Caco-2 (cell line): ENCODE measurements at regions of chr10 and their contacts with region 1.

Region 1: GRCh38 chr10:63157845-63158624 is 24.9 kb downstream of the NRBF2 start:
- DNase-seq: peak; percentile 70 to 80
- H3K4me3 ChIP-seq: no peak overlapping the region
- H3K4me3 Mint-ChIP-seq: no peak overlapping the region
- H3K27ac Mint-ChIP-seq: no peak overlapping the region
- H3K4me1 ChIP-seq: no peaks in the 10 kb centered on the region
- H3K4me1 Mint-ChIP-seq: no peaks in the 10 kb centered on the region
- H3K27me3 ChIP-seq: no peaks in the 10 kb centered on the region
- H3K27me3 Mint-ChIP-seq: no peaks in the 10 kb centered on the region
- CTCF ChIP-seq: peak; percentile 91 to 92

Region 2: DNA sequence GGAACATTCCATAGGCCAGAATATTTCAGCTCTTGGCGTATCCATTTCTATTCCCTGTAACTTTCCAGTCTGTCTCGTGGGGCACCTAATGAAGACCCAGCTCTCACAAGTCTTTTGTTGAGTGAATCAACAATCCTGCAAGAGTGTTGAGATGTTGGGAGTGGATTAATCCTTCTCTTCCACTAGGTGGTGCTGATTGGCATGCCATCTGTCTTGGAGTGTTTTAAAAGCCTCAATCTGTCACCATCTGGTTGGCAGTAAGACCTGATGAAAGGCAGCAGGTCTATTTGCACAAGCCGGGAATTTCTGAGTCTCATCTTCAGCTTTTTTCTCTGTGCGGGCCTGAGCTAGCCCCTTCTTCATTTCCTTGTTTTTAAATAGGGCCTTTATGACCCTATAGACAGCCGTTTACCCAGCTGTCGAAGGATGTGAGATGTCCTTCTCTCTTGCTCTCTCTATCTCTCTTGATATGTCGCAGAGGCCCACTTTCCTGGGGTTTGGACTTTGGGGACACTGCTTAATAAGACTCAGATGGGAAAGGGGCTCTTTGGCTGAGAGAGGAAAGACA is 603.3 kb before region 1 on chr10:
- CTCF ChIA-PET with region 1: no interaction called
- POLR2A ChIA-PET with region 1: no interaction called
- intact Hi-C with region 1: loop called (anchors 1 kb)
- DNase-seq: peak in 1 of 2 experiments; percentile 50
- H3K4me3 ChIP-seq: no peak overlapping the region
- H3K4me3 Mint-ChIP-seq: no peak overlapping the region
- H3K27ac Mint-ChIP-seq: no peak overlapping the region
- H3K4me1 ChIP-seq: no peaks in the 10 kb centered on the region
- H3K4me1 Mint-ChIP-seq: no peaks in the 10 kb centered on the region
- H3K27me3 ChIP-seq: no peaks in the 10 kb centered on the region; the same call in 1 of the 2 replicates
- H3K27me3 Mint-ChIP-seq: peaks cover 22% of the 10 kb centered on the region
- CTCF ChIP-seq: peak; percentile 52 to 74

Region 3: GRCh38 chr10:62610649-62611229 is 547.3 kb before region 1 on chr10:
- CTCF ChIA-PET with region 1: no interaction called
- POLR2A ChIA-PET with region 1: no interaction called
- intact Hi-C with region 1: loop called (anchors 1 kb)
- DNase-seq: peak; percentile 79 to 85
- H3K4me3 ChIP-seq: no peak overlapping the region
- H3K4me3 Mint-ChIP-seq: peak overlapping the region; percentile 6
- H3K27ac Mint-ChIP-seq: no peak overlapping the region
- H3K4me1 ChIP-seq: no peaks in the 10 kb centered on the region
- H3K4me1 Mint-ChIP-seq: no peaks in the 10 kb centered on the region
- H3K27me3 ChIP-seq: no peaks in the 10 kb centered on the region
- H3K27me3 Mint-ChIP-seq: peaks cover 18% of the 10 kb centered on the region
- CTCF ChIP-seq: peak; percentile 92 to 93

Region 4: DNA sequence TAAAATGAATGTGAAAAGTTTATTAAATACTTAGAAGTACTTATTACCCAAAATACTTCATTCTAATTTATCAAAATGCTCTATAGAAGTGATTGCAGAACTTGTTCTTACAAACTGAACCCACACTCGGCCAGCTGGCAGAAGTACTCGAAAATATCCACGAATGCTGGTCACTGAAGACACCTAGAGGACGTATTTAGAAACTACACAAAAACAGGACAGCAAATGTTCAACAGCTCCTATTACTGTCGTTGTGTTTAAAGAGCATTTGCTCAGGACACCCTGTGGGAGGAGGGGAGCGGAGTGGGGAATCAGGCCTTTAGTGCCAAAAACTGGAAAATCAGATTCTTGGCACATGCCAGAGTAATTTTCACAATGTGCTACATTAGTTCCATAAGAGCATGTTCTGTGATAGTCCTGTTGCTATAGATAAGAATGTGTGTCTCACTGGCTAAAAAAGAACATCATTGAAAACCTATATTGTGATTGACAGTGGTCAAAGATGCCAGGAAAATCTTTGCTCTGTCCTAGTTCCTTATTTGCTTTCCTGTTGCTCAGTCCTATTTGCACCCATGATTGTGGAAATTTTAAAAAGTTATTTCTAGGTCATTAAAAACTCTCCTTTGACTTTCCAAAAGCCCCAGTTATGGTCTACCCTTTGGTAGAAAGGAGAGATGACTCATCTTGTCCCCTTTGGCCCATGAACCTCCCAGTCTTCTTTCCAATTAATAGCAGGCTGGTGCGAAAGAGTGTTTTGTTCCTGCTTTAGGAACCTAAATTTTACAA is 73.9 kb before region 1 on chr10:
- CTCF ChIA-PET with region 1: interaction called, 9 read pairs
- POLR2A ChIA-PET with region 1: no interaction called
- intact Hi-C with region 1: loop called (anchors 1 kb)
- DNase-seq: peak; percentile 54 to 69
- H3K4me3 ChIP-seq: no peak overlapping the region
- H3K4me3 Mint-ChIP-seq: no peak overlapping the region
- H3K27ac Mint-ChIP-seq: no peak overlapping the region
- H3K4me1 ChIP-seq: no peaks in the 10 kb centered on the region
- H3K4me1 Mint-ChIP-seq: no peaks in the 10 kb centered on the region
- H3K27me3 ChIP-seq: no peaks in the 10 kb centered on the region
- H3K27me3 Mint-ChIP-seq: peaks cover 32% of the 10 kb centered on the region
- CTCF ChIP-seq: peak; percentile 86 to 90

Region 5: GRCh38 chr10:63094405-63094804 is 63.6 kb before region 1 on chr10:
- CTCF ChIA-PET with region 1: no interaction called
- POLR2A ChIA-PET with region 1: no interaction called
- intact Hi-C with region 1: no loop called
- DNase-seq: no peak
- H3K4me3 ChIP-seq: no peak overlapping the region
- H3K4me3 Mint-ChIP-seq: no peak overlapping the region
- H3K27ac Mint-ChIP-seq: no peak overlapping the region
- H3K4me1 ChIP-seq: no peaks in the 10 kb centered on the region
- H3K4me1 Mint-ChIP-seq: no peaks in the 10 kb centered on the region
- H3K27me3 ChIP-seq: no peaks in the 10 kb centered on the region
- H3K27me3 Mint-ChIP-seq: peaks cover 5% of the 10 kb centered on the region
- CTCF ChIP-seq: no peak

Region 6: DNA sequence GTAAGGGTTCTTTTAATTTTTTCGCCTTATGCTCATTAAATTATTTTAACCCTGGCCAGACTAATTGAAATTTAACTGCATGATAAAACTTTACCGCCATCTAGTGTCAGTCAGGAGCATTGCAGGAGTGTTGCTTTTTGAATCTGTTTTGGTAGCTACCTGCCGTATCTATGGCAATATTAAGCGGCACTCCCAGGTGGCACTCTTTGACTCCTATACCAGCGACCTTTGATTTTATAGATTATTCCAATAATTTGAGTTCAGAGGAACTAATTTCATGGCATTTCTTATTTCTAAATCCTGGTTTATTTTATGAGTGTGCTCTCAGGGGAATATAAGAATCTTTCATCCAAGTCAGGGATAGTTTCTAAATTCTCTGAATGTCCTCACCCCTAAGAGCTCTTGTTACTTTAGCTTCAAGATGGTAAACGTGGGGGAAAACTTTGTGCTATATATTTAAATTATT is 562.1 kb after region 1 on chr10:
- CTCF ChIA-PET with region 1: interaction called, 17 read pairs
- POLR2A ChIA-PET with region 1: no interaction called
- intact Hi-C with region 1: no loop called
- DNase-seq: peak; percentile 74 to 84
- H3K4me3 ChIP-seq: no peak overlapping the region
- H3K4me3 Mint-ChIP-seq: no peak overlapping the region
- H3K27ac Mint-ChIP-seq: peak overlapping the region; percentile 26
- H3K4me1 ChIP-seq: peaks cover 31% of the 10 kb centered on the region
- H3K4me1 Mint-ChIP-seq: peaks cover 23% of the 10 kb centered on the region
- H3K27me3 ChIP-seq: no peaks in the 10 kb centered on the region
- H3K27me3 Mint-ChIP-seq: no peaks in the 10 kb centered on the region
- CTCF ChIP-seq: peak; percentile 99